PC-9 (cell line): ENCODE measurements at regions of chr2 and their contacts with region 1.

Region 1: GRCh38 chr2:95076784-95077529 is 44.7 kb downstream of the MRPS5 start:
- DNase-seq: peak; percentile 96 to 99
- H3K4me3 ChIP-seq: peak overlapping the region; percentile 70
- H3K27ac ChIP-seq: peak overlapping the region; percentile 33; the same call in 1 of the 2 replicates
- H3K4me1 ChIP-seq: peaks cover 28% of the 10 kb centered on the region
- H3K27me3 ChIP-seq: no peaks in the 10 kb centered on the region
- CTCF ChIP-seq: peak; percentile 97

Region 2: DNA sequence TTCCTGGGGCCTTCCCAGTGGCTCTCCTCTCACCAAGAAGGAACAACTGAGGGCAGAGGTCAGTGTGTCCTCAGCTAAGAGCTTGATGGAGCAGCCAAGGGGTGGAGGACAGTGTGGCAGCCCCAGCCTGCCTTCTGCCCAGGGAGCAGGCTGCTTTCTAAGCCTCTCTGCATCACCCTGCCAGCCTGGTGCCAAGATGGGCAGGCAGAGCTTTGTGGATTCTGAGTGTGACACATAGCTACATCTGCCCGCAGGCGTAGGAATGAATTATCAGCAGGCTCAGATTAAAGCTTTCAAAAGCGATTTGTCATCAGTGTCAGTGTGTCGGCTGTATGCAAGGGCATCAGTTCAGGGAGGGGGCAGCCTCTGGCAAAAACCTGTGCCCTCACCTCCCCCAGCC is 42.7 kb before region 1 on chr2:
- CTCF ChIA-PET with region 1: interaction called, 6 read pairs
- POLR2A ChIA-PET with region 1: no interaction called
- intact Hi-C with region 1: loop called (anchors 2 kb)
- DNase-seq: peak; percentile 75 to 94
- H3K4me3 ChIP-seq: no peak overlapping the region
- H3K27ac ChIP-seq: peak overlapping the region; percentile 99
- H3K4me1 ChIP-seq: peaks cover 84% of the 10 kb centered on the region
- H3K27me3 ChIP-seq: no peaks in the 10 kb centered on the region
- CTCF ChIP-seq: no peak

Region 3: GRCh38 chr2:95043300-95044093 is 33.5 kb before region 1 on chr2:
- CTCF ChIA-PET with region 1: interaction called, 5 read pairs
- POLR2A ChIA-PET with region 1: no interaction called
- intact Hi-C with region 1: loop called (anchors 1 kb)
- DNase-seq: peak in 1 of 2 experiments; percentile 83
- H3K4me3 ChIP-seq: no peak overlapping the region
- H3K27ac ChIP-seq: peak overlapping the region; percentile 48
- H3K4me1 ChIP-seq: peaks cover 65% of the 10 kb centered on the region
- H3K27me3 ChIP-seq: no peaks in the 10 kb centered on the region
- CTCF ChIP-seq: no peak

Region 4: GRCh38 chr2:95062242-95063085 is 14.5 kb before region 1 on chr2:
- CTCF ChIA-PET with region 1: interaction called, 18 read pairs
- POLR2A ChIA-PET with region 1: no interaction called
- intact Hi-C with region 1: loop called (anchors 1 kb)
- DNase-seq: peak; percentile 36 to 83
- H3K4me3 ChIP-seq: no peak overlapping the region
- H3K27ac ChIP-seq: peak overlapping the region; percentile 92
- H3K4me1 ChIP-seq: peaks cover 72% of the 10 kb centered on the region
- H3K27me3 ChIP-seq: no peaks in the 10 kb centered on the region
- CTCF ChIP-seq: no peak

Region 5: GRCh38 chr2:95091885-95092555 is 15.1 kb after region 1 on chr2:
- CTCF ChIA-PET with region 1: no interaction called
- POLR2A ChIA-PET with region 1: no interaction called
- intact Hi-C with region 1: no loop called
- DNase-seq: peak in 1 of 2 experiments; percentile 2
- H3K4me3 ChIP-seq: no peak overlapping the region
- H3K27ac ChIP-seq: no peak overlapping the region
- H3K4me1 ChIP-seq: no peaks in the 10 kb centered on the region
- H3K27me3 ChIP-seq: no peaks in the 10 kb centered on the region
- CTCF ChIP-seq: no peak

Region 6: GRCh38 chr2:95115418-95115817 is 38.5 kb after region 1 on chr2:
- CTCF ChIA-PET with region 1: interaction called, 5 read pairs
- POLR2A ChIA-PET with region 1: no interaction called
- intact Hi-C with region 1: loop called (anchors 2 kb)
- DNase-seq: peak; percentile 69 to 77
- H3K4me3 ChIP-seq: no peak overlapping the region
- H3K27ac ChIP-seq: no peak overlapping the region
- H3K4me1 ChIP-seq: peaks cover 10% of the 10 kb centered on the region; the same call in 1 of the 2 replicates
- H3K27me3 ChIP-seq: no peaks in the 10 kb centered on the region
- CTCF ChIP-seq: peak; percentile 94

Region 7: GRCh38 chr2:95143838-95144237 is 66.9 kb after region 1 on chr2:
- CTCF ChIA-PET with region 1: no interaction called
- POLR2A ChIA-PET with region 1: no interaction called
- intact Hi-C with region 1: no loop called
- DNase-seq: no peak
- H3K4me3 ChIP-seq: no peak overlapping the region
- H3K27ac ChIP-seq: no peak overlapping the region
- H3K4me1 ChIP-seq: no peaks in the 10 kb centered on the region
- H3K27me3 ChIP-seq: no peaks in the 10 kb centered on the region
- CTCF ChIP-seq: no peak

Region 8: GRCh38 chr2:95264624-95265023 is 187.7 kb after region 1 on chr2:
- CTCF ChIA-PET with region 1: no interaction called
- POLR2A ChIA-PET with region 1: no interaction called
- intact Hi-C with region 1: no loop called
- DNase-seq: no peak
- H3K4me3 ChIP-seq: no peak overlapping the region
- H3K27ac ChIP-seq: no peak overlapping the region
- H3K4me1 ChIP-seq: peaks cover 7% of the 10 kb centered on the region; the same call in 1 of the 2 replicates
- H3K27me3 ChIP-seq: no peaks in the 10 kb centered on the region
- CTCF ChIP-seq: no peak